Activated CD4-positive, alpha-beta T cell treated with anti-CD3 and anti-CD28 coated beads, Interleukin-2, amount 10 ng/mL, durations not matched to agents 24 days and 14 days (primary cell): ENCODE measurements at regions of chr19 and their contacts with region 1.

Region 1: GRCh38 chr19:34224996-34225658 is 29.2 kb upstream of the GARRE1 start:
- DNase-seq: no peak
- H3K4me3 Mint-ChIP-seq: peak overlapping the region; percentile 12
- H3K27ac Mint-ChIP-seq: peak overlapping the region; percentile 14
- H3K4me1 Mint-ChIP-seq: peaks cover 35% of the 10 kb centered on the region
- H3K27me3 Mint-ChIP-seq: no peaks in the 10 kb centered on the region

Region 2: GRCh38 chr19:34051255-34051654 is 173.9 kb before region 1 on chr19:
- intact Hi-C with region 1: no loop called
- DNase-seq: no peak
- H3K4me3 Mint-ChIP-seq: no peak overlapping the region
- H3K27ac Mint-ChIP-seq: no peak overlapping the region
- H3K4me1 Mint-ChIP-seq: no peaks in the 10 kb centered on the region
- H3K27me3 Mint-ChIP-seq: peaks cover 2% of the 10 kb centered on the region

Region 3: DNA sequence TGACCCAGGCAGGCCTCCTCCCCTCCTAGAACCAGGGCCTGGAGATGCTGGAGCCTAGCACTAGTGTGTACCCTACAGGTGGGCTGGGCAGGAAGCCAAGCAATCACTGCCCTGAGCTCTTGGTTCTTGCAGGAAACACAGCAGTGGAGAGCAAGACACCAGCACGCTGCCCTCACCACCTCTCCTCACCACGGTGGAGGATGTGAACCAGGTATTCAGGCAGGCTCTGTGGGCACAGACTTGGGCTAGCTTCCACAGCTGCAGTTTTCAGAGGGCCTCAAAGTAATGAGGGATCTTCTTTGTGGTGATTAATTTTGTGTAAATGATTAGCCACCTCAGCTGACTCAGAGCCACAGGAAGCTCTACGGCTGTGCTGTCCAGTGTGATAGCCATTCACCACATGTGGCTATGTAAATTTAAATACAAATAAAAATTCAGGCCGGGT is 126.3 kb after region 1 on chr19:
- intact Hi-C with region 1: loop called (anchors 5 kb)
- DNase-seq: peak; percentile 75
- H3K4me3 Mint-ChIP-seq: peak overlapping the region; percentile 61
- H3K27ac Mint-ChIP-seq: peak overlapping the region; percentile 87
- H3K4me1 Mint-ChIP-seq: peaks cover 20% of the 10 kb centered on the region
- H3K27me3 Mint-ChIP-seq: no peaks in the 10 kb centered on the region